ENCODE measurements at regions of chr20 and their contacts with region 1.

Region 1: DNA sequence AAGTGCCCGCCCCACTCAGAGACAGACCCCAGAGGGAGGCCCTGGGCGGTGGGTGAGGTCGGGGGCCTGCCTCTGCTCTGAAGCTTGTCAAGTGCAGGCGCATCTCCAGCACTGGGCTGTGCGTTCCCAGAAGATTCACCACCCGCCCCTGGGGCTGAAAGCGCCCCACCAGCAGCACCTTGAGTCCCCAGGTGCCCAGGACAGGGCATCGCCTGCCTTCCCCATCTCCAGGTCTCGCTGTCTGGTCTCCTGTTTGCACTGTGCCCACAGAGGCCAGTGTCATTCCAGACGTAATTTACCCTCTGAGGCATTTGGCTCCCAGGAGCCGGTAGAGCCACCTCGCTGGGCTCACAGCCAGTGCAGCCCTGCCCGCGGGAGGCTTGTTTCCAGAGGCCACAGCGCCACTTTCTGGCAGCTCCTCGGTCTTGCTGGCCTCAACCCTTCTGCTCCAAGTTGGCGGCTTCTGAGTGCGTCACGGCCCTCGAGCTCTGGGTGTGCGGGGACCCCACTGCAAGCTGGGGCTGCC is 191.1 kb downstream of the TAF4 start:
- DNase-seq: peak; percentile 68
- ATAC-seq: peak; percentile 79

Region 2: GRCh38 chr20:60851826-60852704 is 1022.5 kb before region 1 on chr20:
- intact Hi-C with region 1: loop called (anchors 10 kb)
- DNase-seq: no peak
- ATAC-seq: no peak

Region 3: GRCh38 chr20:61797200-61797599 is 77.4 kb before region 1 on chr20:
- intact Hi-C with region 1: no loop called
- DNase-seq: peak; percentile 10
- ATAC-seq: no peak